ENCODE measurements at regions of chr4 and their contacts with region 1.

Region 1: GRCh38 chr4:182806259-182807252 is 110.6 kb downstream of the DCTD start:
- DNase-seq: peak; percentile 62
- H3K4me3 Mint-ChIP-seq: no peak overlapping the region
- H3K27ac Mint-ChIP-seq: no peak overlapping the region
- H3K4me1 Mint-ChIP-seq: no peaks in the 10 kb centered on the region
- H3K27me3 Mint-ChIP-seq: no peaks in the 10 kb centered on the region
- CTCF ChIP-seq: peak; percentile 88

Region 2: DNA sequence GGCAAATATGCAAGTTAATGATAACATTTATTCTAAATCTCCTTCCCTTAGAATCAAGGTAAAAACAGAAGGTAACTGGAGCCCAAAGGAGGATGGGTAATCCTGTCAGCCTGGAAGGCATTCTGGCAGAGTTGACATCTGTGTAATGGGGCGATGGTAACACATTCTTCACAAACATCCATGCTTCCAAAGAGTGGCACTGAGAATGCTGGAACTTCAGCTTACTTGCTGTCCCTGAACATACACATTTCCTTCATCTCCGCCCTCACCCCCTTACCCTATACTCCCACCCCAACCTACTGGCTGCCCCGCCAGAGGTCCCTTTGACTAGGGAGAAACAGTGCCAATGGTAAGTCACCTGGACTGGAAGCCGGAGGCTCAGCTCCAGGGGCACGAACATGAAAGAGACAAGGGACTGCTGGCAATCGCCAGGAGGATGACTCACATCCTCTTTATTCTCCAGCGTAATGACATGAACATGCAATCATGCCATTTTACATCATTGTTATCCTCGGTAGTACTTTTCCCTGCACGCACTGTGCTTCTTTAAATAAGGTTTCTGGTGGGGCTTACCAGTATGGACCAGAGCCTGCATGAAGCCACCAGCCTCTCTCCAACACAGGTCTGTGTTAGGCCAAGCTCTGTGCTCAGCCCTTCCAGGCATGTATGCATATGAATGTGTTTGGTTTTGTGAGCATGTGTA is 1257.5 kb before region 1 on chr4:
- CTCF ChIA-PET with region 1: no interaction called
- POLR2A ChIA-PET with region 1: no interaction called
- intact Hi-C with region 1: loop called (anchors 10 kb)
- DNase-seq: peak; percentile 88
- H3K4me3 Mint-ChIP-seq: peak overlapping the region; percentile 52
- H3K27ac Mint-ChIP-seq: peak overlapping the region; percentile 95
- H3K4me1 Mint-ChIP-seq: peaks cover 11% of the 10 kb centered on the region
- H3K27me3 Mint-ChIP-seq: no peaks in the 10 kb centered on the region
- CTCF ChIP-seq: no peak

Region 3: GRCh38 chr4:181939199-181939945 is 867.2 kb before region 1 on chr4:
- CTCF ChIA-PET with region 1: no interaction called
- POLR2A ChIA-PET with region 1: no interaction called
- intact Hi-C with region 1: loop called (anchors 1 kb)
- DNase-seq: peak; percentile 24
- H3K4me3 Mint-ChIP-seq: no peak overlapping the region
- H3K27ac Mint-ChIP-seq: peak overlapping the region; percentile 43
- H3K4me1 Mint-ChIP-seq: peaks cover 6% of the 10 kb centered on the region
- H3K27me3 Mint-ChIP-seq: no peaks in the 10 kb centered on the region
- CTCF ChIP-seq: peak; percentile 24

Region 4: DNA sequence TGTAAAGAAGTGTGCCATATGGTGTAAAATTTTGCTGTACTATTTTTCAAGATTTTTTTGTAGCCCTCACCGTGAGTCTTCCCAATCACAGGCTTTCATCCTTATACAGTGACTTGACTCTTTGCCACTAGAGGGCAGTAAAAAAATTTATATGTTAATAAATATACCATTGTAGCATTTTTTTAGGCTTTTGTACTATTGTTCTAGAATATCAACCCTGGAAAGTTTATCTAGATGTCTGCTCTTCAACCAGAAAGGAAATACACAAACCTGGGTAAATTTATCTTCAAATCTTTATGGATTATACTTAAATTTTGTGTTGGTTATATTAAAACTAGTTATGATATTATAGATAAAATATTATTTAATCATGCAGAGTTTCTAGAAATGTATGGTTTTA is 328.1 kb before region 1 on chr4:
- CTCF ChIA-PET with region 1: interaction called, 5 read pairs
- POLR2A ChIA-PET with region 1: no interaction called
- intact Hi-C with region 1: loop called (anchors 1 kb)
- DNase-seq: peak; percentile 50
- H3K4me3 Mint-ChIP-seq: no peak overlapping the region
- H3K27ac Mint-ChIP-seq: no peak overlapping the region
- H3K4me1 Mint-ChIP-seq: no peaks in the 10 kb centered on the region
- H3K27me3 Mint-ChIP-seq: no peaks in the 10 kb centered on the region
- CTCF ChIP-seq: peak; percentile 57

Measured in MCF 10A (cell line).